Activated CD4-positive, alpha-beta memory T cell treated with anti-CD3 and anti-CD28 coated beads for 36 hours (primary cell): ENCODE measurements at regions of chr6 and their contacts with region 1.

Region 1: DNA sequence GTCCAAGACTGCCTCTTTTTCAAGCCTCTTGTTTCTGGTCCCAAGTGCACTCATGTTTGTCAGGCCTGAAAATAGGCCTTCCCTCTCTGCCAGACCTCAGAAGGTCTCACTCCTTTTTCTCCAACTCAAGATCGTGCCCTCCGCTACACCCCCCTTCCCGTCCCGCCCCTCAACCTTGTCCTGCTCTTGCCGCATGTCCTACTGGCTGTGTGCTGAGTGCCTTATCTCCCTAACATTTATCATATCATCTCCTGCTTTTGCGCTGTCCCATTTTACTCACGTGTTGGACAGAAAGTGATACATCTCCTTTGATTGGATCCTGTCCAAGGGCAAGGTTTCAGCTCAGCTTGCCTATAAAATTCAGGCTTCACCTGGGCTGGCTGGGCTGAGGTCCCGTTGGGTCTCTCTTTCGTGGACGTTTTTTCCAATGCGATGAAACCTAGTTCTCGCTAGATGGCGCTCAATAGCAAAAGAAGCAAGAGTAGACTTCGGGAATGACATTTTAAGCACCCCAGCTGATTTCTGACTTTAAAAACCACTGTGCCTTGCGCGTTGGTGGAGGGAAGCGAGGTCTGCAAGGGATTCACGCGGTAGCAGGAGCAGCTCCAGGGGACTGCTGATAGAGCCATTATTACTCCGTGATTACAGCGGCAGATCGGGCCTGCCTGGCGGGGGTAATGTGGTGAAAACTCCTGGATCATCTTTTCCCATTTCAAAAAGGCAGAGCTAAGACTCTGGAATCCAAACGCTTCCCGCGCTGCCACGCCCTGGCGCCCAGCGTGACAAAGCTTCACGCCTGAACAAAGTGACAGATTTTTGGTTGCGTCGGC is 137.6 kb downstream of the IMPG1 start:
- DNase-seq: peak; percentile 40
- H3K4me3 Mint-ChIP-seq: peak overlapping the region; percentile 40
- H3K27ac Mint-ChIP-seq: no peak overlapping the region
- H3K4me1 Mint-ChIP-seq: peaks cover 8% of the 10 kb centered on the region
- H3K27me3 Mint-ChIP-seq: peaks cover 17% of the 10 kb centered on the region

Region 2: DNA sequence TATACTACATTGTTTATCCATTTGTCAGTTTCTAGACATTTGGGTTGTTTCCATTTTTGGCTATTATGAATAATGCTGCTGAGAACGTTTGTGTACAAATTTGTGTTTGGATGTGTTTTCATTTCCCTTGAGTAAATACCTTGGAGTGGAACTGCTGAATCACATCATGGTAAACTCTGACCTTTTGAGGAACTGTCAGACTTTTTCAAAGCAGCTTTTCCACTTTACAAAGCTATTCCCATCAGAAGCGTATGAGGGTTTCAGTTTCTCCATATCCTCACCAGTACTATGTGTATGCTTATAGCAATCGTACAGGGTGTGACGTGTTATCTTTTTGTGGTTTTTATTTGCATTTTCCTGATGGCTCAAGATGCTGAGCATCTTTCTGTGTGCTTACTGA is 82.1 kb before region 1 on chr6:
- CTCF ChIA-PET with region 1: no interaction called
- POLR2A ChIA-PET with region 1: no interaction called
- intact Hi-C with region 1: no loop called
- DNase-seq: no peak
- H3K4me3 Mint-ChIP-seq: no peak overlapping the region
- H3K27ac Mint-ChIP-seq: no peak overlapping the region
- H3K4me1 Mint-ChIP-seq: no peaks in the 10 kb centered on the region
- H3K27me3 Mint-ChIP-seq: no peaks in the 10 kb centered on the region

Region 3: DNA sequence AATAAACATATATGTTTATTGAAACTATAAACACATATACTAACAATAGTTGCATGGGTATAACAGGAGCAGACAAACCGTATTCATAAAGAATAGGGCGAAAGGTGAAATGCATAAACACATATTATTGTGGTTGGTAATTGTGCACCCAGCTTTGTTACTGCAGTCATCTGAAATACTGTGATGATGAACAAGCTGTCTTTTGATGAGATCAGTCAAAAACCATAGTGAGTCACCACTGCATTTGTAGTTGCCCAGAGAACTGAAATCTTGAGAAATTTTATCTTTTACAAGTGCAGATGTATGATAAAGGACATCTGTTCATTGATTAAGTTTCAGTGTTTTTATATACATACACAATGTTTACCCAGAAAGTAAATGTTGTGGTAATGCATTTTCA is 52.1 kb before region 1 on chr6:
- CTCF ChIA-PET with region 1: no interaction called
- POLR2A ChIA-PET with region 1: no interaction called
- intact Hi-C with region 1: no loop called
- DNase-seq: no peak
- H3K4me3 Mint-ChIP-seq: no peak overlapping the region
- H3K27ac Mint-ChIP-seq: no peak overlapping the region
- H3K4me1 Mint-ChIP-seq: no peaks in the 10 kb centered on the region
- H3K27me3 Mint-ChIP-seq: no peaks in the 10 kb centered on the region

Region 4: DNA sequence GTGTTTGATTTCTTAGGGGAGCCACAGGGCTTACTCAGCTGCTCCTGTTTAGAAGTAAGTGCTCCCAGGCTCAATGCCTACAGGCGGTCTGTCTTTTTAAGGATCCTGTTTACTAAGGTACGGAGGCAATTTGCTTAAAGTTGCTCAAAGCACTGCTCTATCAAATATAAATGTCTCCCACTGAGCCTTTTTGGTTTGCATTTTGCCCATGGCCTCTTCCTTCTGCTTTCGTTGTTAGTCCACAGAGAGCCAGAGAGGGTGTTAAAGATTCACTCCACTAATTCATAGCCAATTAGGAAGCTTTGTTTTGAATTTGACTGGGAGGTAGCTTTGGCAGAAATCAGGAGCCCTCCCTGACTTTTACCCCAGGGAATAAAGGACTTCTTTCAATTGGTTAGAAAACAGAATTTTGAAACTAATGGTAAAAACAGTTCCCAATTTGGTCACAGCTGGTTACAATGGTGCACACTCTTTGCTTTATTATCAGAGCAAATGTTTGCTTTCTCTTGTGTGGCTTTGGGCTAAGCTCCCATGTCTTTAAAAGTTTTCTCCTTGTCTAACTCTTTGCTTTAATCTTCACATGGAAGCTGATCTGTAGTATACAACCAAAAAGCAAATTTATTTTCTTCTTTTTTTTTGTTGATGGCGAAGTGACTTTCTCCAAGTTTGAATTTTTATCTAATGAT is 11.4 kb after region 1 on chr6:
- CTCF ChIA-PET with region 1: interaction called, 12 read pairs
- POLR2A ChIA-PET with region 1: no interaction called
- intact Hi-C with region 1: no loop called
- DNase-seq: no peak
- H3K4me3 Mint-ChIP-seq: no peak overlapping the region
- H3K27ac Mint-ChIP-seq: no peak overlapping the region
- H3K4me1 Mint-ChIP-seq: no peaks in the 10 kb centered on the region
- H3K27me3 Mint-ChIP-seq: peaks cover 10% of the 10 kb centered on the region

Region 5: DNA sequence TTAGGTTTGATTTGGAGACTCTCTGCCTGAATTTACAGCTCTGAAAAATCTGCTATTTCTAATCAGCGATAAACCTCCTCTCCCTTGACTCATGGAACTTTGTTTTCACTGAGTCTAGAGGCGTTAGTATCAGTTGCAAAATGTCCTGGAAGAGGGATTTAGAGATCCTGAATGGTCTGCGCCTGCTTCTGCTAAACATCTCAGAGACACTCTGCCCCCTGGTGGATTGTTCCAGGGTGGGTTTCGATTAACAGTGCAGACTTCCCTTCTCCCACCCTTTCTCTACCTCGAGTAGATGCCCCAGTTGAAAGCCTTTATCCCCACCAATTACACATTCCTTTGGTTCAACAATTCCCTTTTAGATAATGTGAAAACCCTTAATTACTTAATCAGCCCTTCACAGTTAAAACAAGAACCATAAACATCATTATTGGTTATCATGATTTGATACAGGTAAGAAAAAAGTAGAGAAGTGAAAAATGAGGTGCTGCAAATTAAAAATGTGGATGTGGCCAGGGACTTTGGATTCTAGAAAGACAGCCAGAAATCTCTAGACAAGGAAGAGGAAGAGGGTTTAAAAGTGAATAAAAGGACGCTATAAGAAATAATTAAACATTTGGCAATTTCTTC is 1523.0 kb after region 1 on chr6:
- CTCF ChIA-PET with region 1: no interaction called
- POLR2A ChIA-PET with region 1: no interaction called
- intact Hi-C with region 1: loop called (anchors 2 kb)
- DNase-seq: peak; percentile 50
- H3K4me3 Mint-ChIP-seq: no peak overlapping the region
- H3K27ac Mint-ChIP-seq: no peak overlapping the region
- H3K4me1 Mint-ChIP-seq: peaks cover 6% of the 10 kb centered on the region
- H3K27me3 Mint-ChIP-seq: peaks cover 23% of the 10 kb centered on the region